ENCODE measurements at regions of chr16 and their contacts with region 1.

Region 1: DNA sequence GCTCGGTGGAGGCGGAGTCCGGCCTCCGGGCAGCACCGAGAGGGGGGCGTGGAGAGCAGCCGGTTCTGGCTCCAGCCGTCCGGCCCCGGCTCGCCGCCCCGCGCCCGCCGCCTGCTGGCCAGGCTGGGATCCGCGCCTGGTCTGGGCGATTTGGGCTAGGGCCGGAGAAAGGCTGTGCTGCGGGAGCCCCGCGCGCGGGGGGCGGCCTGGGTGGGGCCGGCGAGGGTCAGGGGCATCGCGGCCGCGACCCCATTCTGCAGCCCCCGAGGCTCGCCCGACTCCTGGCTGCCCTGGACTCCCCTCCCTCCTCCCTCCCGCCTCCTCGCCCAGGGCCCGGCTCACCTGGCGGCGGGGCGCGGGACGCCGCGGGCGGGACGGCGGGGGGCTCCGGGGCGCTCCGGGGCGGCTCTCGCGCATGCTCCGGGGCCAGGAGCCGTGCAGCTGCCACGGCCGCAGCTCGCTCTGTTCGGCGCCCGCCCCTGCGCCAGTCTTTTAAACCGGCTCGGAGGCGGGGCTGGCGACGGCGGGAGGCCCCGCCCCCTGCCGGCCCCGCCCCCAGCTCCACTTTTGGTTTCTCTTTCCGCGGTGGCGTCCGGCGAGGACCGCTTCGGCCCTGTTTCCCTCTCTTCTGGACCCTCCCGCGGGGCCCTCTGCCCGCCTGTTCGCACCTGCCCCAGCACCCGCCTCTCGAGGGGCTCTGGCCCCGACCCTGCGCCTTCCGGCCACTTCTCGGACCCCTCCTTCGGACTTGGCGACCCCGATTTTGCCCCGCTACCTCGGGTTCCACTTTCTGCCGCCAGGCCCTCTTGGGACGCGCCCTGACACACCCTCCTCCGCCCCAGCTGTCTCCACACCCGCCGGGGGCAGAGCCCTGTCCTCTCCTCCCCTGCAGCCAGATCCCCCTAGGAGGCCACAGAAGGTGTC is at the start of gene SOCS1:
- DNase-seq: peak; percentile 89
- CTCF ChIP-seq: peak; percentile 92

Region 2: DNA sequence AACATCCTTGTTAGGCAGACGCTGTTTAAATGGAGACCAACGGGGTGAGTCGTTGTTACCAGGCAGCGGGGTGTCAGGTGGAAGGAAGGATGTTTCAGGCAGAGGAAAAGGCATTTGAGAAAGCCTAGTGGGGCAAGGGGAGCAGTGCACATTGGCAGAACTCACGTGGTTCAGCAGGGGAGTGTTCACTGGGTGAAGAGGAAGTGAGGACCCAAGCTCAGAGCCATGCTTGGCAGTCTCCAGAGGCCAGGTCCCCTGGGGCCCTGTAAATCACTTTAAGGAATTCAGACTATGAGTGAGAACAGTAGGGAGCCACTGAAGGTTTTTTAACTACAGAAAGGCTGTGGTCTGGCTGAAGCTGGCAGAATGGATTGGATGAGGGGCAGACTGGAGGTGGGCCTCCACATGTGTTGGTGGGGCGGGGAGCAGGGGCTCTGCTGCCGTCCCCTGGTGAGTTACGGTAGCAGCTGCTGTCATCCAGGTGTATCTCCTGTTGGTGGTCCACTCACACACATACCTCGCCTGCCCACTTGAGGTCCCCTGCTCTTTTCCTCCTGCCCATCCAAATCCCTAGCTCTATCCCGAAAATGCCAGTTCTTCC is 306.5 kb before region 1 on chr16:
- CTCF ChIA-PET with region 1: interaction called, 24 read pairs
- POLR2A ChIA-PET with region 1: interaction called, 7 read pairs
- DNase-seq: no peak
- CTCF ChIP-seq: no peak

Region 3: GRCh38 chr16:10981697-10982216 is 274.2 kb before region 1 on chr16:
- CTCF ChIA-PET with region 1: interaction called, 182 read pairs
- POLR2A ChIA-PET with region 1: interaction called, 15 read pairs
- DNase-seq: peak; percentile 71
- CTCF ChIP-seq: peak; percentile 76

Region 4: DNA sequence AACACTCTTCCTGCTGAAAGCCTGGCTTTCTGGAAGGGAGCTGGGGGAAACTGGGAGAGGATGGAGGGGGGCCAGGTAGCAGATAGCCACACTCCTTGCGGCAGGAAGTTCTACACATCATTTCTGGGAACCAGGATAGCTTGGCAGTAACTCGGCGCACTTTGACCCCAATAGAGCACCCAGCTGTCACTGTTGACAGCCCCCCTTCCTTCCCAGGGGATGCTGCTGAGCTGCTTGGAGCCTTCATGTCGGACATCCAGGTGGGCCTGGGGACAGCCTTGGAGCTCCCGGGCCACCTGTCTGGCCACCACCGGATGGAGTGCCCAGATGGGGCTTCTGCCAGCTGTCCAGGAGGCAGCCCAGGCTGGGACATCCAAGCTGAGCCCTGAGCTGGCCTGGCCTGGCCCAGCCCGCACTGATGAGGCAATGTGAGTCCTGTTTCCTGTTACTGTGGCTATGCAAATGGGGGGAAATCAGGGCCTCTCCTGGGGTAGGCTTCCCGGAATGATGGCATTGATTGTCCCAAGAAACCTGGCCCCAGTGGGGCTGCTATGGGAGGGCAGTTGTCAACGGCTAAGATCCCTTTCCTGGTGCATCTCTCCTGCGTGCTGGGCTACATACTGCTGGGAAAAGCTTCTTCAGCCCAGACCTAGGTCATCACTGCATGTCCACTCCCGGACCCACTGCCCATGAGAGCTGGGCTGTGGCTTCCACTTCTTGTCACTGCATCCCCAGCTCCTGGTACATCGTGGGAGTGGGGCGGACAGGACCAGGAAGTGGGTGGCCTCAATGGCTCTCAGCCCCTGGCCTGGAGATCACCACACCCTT is 50.0 kb before region 1 on chr16:
- CTCF ChIA-PET with region 1: interaction called, 12 read pairs
- POLR2A ChIA-PET with region 1: interaction called, 18 read pairs
- DNase-seq: peak; percentile 57
- CTCF ChIP-seq: no peak

Region 5: DNA sequence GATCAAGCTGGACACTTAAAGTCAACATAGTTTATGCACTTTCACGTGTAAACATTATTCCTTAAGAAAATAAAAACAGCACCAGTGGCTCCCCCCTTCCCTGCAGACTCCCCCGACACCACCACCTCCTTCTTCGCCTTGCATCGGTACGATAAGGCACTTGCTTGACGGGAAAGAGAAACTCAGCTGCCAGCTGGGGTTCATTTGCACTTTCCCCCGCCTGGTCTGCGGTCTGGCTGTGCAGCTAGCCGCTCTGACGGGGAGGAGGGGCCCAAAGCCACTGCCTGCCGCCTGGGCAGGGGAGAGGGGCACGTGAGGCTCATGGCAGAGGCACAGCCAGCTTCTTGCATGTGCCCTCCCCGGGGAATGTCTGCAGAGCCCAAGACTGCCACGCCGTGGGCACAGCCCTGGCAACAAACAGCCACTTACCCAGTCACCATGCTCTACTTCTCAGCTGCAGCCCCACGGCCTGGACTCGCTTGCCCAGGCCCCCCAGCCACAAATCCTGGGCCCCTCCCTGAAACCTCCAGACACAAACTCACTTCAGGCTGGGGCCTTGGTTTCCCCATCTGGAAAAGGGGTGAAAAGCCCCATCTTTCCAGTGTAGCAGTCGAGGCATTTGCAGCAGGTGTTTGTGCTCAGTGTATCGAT is 41.6 kb after region 1 on chr16:
- CTCF ChIA-PET with region 1: interaction called, 25 read pairs
- POLR2A ChIA-PET with region 1: interaction called, 26 read pairs
- DNase-seq: peak; percentile 79
- CTCF ChIP-seq: no peak

Region 6: DNA sequence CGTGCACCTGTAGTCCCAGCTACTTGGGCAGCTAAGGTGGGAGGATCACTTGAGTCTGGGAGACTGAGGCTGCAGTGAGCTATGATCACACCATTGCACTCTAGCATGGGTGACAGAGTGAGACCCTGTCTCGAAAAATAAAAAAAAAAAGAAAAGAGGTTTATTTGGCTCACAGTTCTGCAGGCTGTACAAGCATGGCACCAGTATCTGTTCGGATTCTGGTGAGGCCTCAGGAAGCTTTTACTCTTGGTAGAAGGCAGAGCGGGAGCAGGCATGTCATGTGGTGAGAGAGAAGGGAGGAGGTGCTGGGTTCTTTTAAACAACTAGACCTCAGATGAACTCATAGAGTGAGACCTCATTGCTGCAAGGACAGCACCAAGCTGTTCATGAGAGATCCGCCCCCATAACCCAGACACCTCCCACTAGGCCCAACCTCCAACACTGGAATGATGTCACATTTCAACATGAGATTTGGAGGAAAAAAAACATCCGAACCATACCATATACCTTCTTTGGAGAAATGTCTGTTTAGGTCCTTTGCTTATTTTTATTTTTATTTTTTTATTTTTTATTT is 78.9 kb after region 1 on chr16:
- CTCF ChIA-PET with region 1: no interaction called
- POLR2A ChIA-PET with region 1: no interaction called
- DNase-seq: no peak
- CTCF ChIP-seq: no peak

Region 7: GRCh38 chr16:11356573-11357331 is 100.8 kb after region 1 on chr16:
- CTCF ChIA-PET with region 1: interaction called, 33 read pairs
- POLR2A ChIA-PET with region 1: interaction called, 21 read pairs
- DNase-seq: peak; percentile 69
- CTCF ChIP-seq: peak; percentile 69

Region 8: DNA sequence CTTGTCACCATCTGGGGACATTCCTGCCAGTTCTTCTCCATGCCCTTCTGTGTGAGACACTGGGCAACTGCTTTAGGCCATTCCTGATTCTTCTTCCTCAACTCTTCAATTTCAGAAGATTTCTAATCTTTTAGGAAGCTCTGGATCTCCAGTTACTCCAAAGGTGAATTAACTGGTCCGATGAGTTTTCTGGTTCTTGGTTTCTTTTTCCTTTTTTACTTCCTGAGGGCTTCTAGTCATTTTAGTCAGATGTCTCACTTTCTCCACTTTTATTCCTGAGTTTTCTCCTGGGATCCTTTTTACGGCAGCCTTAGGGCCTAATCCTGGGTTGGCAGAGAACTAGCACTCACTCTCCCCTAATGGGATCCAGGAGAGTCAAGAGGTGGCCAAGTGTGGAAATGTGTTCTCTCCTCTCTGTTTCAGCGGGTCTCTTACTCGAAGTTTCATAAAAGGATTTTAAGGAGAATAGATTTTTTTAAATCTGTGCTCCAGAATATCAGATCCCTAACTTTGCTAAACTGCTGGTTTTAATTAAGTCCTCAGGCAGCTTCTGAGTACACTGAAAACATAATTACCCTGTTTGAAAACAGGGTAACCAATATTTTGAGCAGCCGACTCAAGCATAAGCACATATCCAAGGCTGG is 196.9 kb after region 1 on chr16:
- CTCF ChIA-PET with region 1: no interaction called
- POLR2A ChIA-PET with region 1: no interaction called
- DNase-seq: no peak
- CTCF ChIP-seq: no peak

Measured in GM10248 (cell line).